ENCODE measurements at regions of chr9 and their contacts with region 1.

Region 1: GRCh38 chr9:135864447-135865049 is 42.8 kb downstream of the CAMSAP1 start:
- DNase-seq: peak; percentile 29 to 58 (median 47)
- H3K4me3 ChIP-seq: no peak overlapping the region
- H3K4me3 Mint-ChIP-seq: no peak overlapping the region
- H3K27ac ChIP-seq: no peak overlapping the region
- H3K27ac Mint-ChIP-seq: peak overlapping the region in 2 of 7 donors; percentile 41 to 77
- H3K4me1 ChIP-seq: no peaks in the 10 kb centered on the region
- H3K4me1 Mint-ChIP-seq: peaks cover 5% of the 10 kb centered on the region
- H3K27me3 ChIP-seq: no peaks in the 10 kb centered on the region
- H3K27me3 Mint-ChIP-seq: peaks cover 0 to 1% (median 0%) of the 10 kb centered on the region in 3 donors
- CTCF ChIP-seq: peak; percentile 91

Region 2: GRCh38 chr9:135961277-135961705 is 96.7 kb after region 1 on chr9 and contains the start of gene UBAC1:
- intact Hi-C with region 1: loop called in 1 of 2 experiments (anchors 10 kb)
- DNase-seq: peak; percentile 94 to 96 (median 95)
- H3K4me3 ChIP-seq: peak within 1 kb of the TSS; percentile 53 to 88 (median 64)
- H3K4me3 Mint-ChIP-seq: peak within 1 kb of the TSS; percentile 93 to 94
- H3K27ac ChIP-seq: peak within 1 kb of the TSS; percentile 63 to 91
- H3K27ac Mint-ChIP-seq: peak within 1 kb of the TSS; percentile 91 to 96 (median 94)
- H3K4me1 ChIP-seq: peaks cover 45 to 51% of the 10 kb centered on the region in 2 donors
- H3K4me1 Mint-ChIP-seq: peaks cover 47% of the 10 kb centered on the region
- H3K27me3 ChIP-seq: no peaks in the 10 kb centered on the region
- H3K27me3 Mint-ChIP-seq: peaks cover 1 to 3% (median 2%) of the 10 kb centered on the region in 3 donors
- CTCF ChIP-seq: peak; percentile 23
- polyA plus RNA-seq, gene UBAC1: 35.8 to 63.1 (median 52.5) TPM

Region 3: DNA sequence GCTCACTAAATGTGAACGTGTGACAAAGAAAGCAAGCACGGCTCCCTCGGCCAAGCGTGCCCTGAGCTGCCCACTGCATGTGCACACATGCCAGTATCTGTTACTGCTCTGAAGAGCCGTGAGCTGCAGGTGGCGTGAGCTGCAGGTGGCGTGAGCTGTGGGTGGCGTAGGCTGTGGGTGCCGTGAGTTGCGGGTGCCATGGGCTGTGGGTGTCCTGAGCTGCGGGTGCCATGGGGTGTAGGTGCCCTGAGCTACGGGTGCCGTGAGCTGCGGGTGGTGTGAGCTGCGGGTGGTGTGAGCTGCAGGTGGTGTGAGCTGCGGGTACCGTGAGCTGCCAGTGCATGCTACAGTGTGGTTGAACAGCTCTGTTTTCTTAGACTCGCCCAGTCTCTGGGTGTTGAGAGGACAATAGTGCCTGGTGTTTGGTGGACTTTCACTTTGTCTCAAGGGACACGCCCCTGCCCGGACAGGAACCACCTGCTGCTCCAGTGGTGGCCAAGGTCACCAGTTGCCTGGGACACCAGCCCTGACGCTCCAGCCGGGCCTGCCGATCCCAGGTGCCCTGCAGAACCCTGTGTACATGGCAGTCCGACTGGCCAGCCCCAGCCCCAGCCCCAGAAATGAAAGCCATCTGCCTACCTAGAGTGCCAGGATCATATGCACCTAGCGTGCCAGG is 432.6 kb after region 1 on chr9:
- intact Hi-C with region 1: no loop called
- DNase-seq: no peak
- H3K4me3 ChIP-seq: no peak overlapping the region
- H3K4me3 Mint-ChIP-seq: no peak overlapping the region
- H3K27ac ChIP-seq: no peak overlapping the region
- H3K27ac Mint-ChIP-seq: peak overlapping the region in 1 of 7 donors; percentile 28
- H3K4me1 ChIP-seq: no peaks in the 10 kb centered on the region
- H3K4me1 Mint-ChIP-seq: no peaks in the 10 kb centered on the region
- H3K27me3 ChIP-seq: no peaks in the 10 kb centered on the region
- H3K27me3 Mint-ChIP-seq: peaks cover 0 to 5% (median 3%) of the 10 kb centered on the region in 3 donors
- CTCF ChIP-seq: no peak